ENCODE measurements at regions of chr7 and their contacts with region 1.

Region 1: GRCh38 chr7:156907656-156908055 is 14.7 kb upstream of the LMBR1 start:
- DNase-seq: no peak
- ATAC-seq: no peak
- H3K4me3 ChIP-seq: no peak overlapping the region
- H3K4me3 Mint-ChIP-seq: no peak overlapping the region
- H3K27ac ChIP-seq: no peak overlapping the region
- H3K27ac Mint-ChIP-seq: no peak overlapping the region
- H3K4me1 ChIP-seq: peaks cover 16% of the 10 kb centered on the region
- H3K4me1 Mint-ChIP-seq: peaks cover 15% of the 10 kb centered on the region
- H3K27me3 ChIP-seq: no peaks in the 10 kb centered on the region
- H3K27me3 Mint-ChIP-seq: peaks cover 5% of the 10 kb centered on the region
- CTCF ChIP-seq: no peak

Region 2: GRCh38 chr7:156968183-156968582 is 60.5 kb after region 1 on chr7:
- CTCF ChIA-PET with region 1: no interaction called
- POLR2A ChIA-PET with region 1: no interaction called
- intact Hi-C with region 1: no loop called
- DNase-seq: no peak
- ATAC-seq: no peak
- H3K4me3 ChIP-seq: no peak overlapping the region
- H3K4me3 Mint-ChIP-seq: no peak overlapping the region
- H3K27ac ChIP-seq: no peak overlapping the region
- H3K27ac Mint-ChIP-seq: no peak overlapping the region
- H3K4me1 ChIP-seq: no peaks in the 10 kb centered on the region
- H3K4me1 Mint-ChIP-seq: no peaks in the 10 kb centered on the region
- H3K27me3 ChIP-seq: no peaks in the 10 kb centered on the region
- H3K27me3 Mint-ChIP-seq: no peaks in the 10 kb centered on the region
- CTCF ChIP-seq: no peak

Region 3: DNA sequence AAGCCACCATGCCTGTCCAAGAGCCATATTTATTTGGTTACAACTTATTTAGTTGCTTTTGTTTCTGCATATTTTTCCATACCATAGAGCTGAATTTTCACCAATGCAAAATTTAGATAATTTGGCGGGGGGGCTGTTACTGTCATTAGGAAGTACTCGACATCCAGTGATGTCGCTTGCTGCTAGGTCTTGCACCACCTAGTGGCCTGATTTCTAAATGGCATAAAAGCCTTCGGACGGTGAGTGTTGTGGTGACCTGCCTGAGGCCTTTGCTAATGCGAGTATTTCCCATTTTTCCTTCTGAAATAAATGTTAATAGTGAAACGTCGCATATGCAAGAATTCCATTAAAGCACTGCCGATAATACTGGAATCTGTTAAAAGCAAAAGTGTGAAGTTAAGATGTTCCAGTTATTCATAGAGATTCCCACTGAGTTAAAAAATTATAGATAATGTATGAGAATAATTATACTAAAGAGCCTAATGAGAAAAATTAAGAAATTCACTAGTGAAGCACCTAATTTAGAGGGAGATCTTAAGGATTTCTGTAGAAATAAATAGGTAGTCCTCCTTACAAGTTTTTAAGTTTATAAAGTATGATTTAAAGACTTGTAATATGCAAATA is 343.1 kb after region 1 on chr7:
- CTCF ChIA-PET with region 1: interaction called, 3 read pairs
- POLR2A ChIA-PET with region 1: no interaction called
- intact Hi-C with region 1: loop called in 1 of 2 experiments (anchors 2 kb)
- DNase-seq: peak in 8 of 9 experiments; percentile 22 to 73 (median 48)
- ATAC-seq: peak; percentile 66
- H3K4me3 ChIP-seq: no peak overlapping the region
- H3K4me3 Mint-ChIP-seq: no peak overlapping the region
- H3K27ac ChIP-seq: no peak overlapping the region
- H3K27ac Mint-ChIP-seq: no peak overlapping the region
- H3K4me1 ChIP-seq: no peaks in the 10 kb centered on the region
- H3K4me1 Mint-ChIP-seq: peaks cover 2% of the 10 kb centered on the region
- H3K27me3 ChIP-seq: no peaks in the 10 kb centered on the region
- H3K27me3 Mint-ChIP-seq: no peaks in the 10 kb centered on the region
- CTCF ChIP-seq: peak; percentile 71

Region 4: GRCh38 chr7:157490457-157490912 is 582.8 kb after region 1 on chr7:
- CTCF ChIA-PET with region 1: no interaction called
- POLR2A ChIA-PET with region 1: no interaction called
- intact Hi-C with region 1: no loop called
- DNase-seq: peak in 7 of 9 experiments; percentile 30 to 88 (median 54)
- ATAC-seq: peak; percentile 89
- H3K4me3 ChIP-seq: no peak overlapping the region
- H3K4me3 Mint-ChIP-seq: peak overlapping the region; percentile 27
- H3K27ac ChIP-seq: no peak overlapping the region
- H3K27ac Mint-ChIP-seq: peak overlapping the region; percentile 84
- H3K4me1 ChIP-seq: peaks cover 21% of the 10 kb centered on the region
- H3K4me1 Mint-ChIP-seq: peaks cover 29% of the 10 kb centered on the region
- H3K27me3 ChIP-seq: peaks cover 0 to 3% of the 10 kb centered on the region in 2 experiments
- H3K27me3 Mint-ChIP-seq: no peaks in the 10 kb centered on the region
- CTCF ChIP-seq: no peak

Measured in CD8-positive, alpha-beta T cell (primary cell).